ENCODE measurements at regions of chr2 and their contacts with region 1.

Region 1: DNA sequence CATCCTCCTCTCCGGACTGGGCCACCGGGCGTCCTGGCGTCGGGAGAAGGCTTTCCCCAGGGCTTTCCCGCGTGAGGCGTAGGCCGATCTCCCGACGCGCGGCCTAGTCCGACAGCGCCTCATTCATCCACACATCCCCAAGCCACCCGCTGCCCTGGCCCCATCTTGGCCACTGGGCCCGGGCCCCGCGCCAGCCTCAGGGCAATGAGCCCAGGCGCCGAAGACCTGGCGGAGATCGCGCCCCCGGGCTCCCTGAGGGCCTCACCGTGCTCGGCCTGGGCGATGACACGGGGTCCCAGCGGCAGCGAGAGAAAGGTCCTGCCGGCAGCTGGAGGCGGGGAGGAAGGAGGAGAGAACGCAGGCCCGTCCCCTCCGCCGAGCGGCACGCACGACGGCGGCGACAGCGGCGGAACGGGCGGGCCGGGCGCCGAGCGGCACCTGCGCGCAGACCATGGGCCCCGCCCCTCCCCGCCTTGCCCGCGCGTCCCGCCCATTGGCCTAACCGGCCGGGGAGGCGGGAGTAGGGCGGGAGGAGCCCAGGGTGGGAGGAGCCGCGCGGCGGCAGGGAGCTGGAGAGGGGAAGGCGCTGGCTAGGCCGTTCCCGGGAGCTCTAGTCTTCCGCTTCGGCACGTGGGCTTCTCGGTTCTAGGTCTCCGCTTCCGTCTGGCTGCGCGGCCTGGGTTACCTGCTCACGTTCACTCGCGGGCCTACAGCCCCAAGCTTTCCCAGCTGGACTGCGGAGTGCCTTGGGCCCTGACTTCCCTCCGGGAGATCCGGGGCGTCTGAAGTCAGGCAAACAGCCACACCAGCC is at the start of gene OLA1:
- DNase-seq: peak; percentile 88
- ATAC-seq: peak; percentile 96
- H3K4me3 ChIP-seq: peak within 1 kb of the TSS; percentile 77 to 91
- H3K27ac ChIP-seq: peak within 1 kb of the TSS; percentile 74
- H3K4me1 ChIP-seq: peaks cover 13 to 28% of the 10 kb centered on the region in 2 experiments
- H3K27me3 ChIP-seq: no peaks in the 10 kb centered on the region
- CTCF ChIP-seq: no peak
- POLR2A ChIP-seq: peak; percentile 88
- RAD21 ChIP-seq: no peak; the same call in 1 of the 2 replicates
- total RNA-seq, gene OLA1: 219 TPM

Region 2: GRCh38 chr2:174120346-174120745 is 128.0 kb before region 1 on chr2:
- CTCF ChIA-PET with region 1: no interaction called
- POLR2A ChIA-PET with region 1: interaction called, 4 read pairs
- RAD21 ChIA-PET with region 1: no interaction called
- intact Hi-C with region 1: loop called (anchors 2 kb)
- DNase-seq: peak; percentile 82
- ATAC-seq: no peak
- H3K4me3 ChIP-seq: peak overlapping the region; percentile 12 to 48
- H3K27ac ChIP-seq: peak overlapping the region; percentile 89
- H3K4me1 ChIP-seq: peaks cover 86% of the 10 kb centered on the region in 2 experiments
- H3K27me3 ChIP-seq: no peaks in the 10 kb centered on the region
- CTCF ChIP-seq: no peak
- POLR2A ChIP-seq: no peak
- RAD21 ChIP-seq: peak; percentile 8; the same call in 1 of the 2 replicates

Region 3: GRCh38 chr2:174235680-174236079 is 12.7 kb before region 1 on chr2:
- CTCF ChIA-PET with region 1: no interaction called
- POLR2A ChIA-PET with region 1: interaction called, 12 read pairs
- RAD21 ChIA-PET with region 1: no interaction called
- intact Hi-C with region 1: no loop called
- DNase-seq: no peak
- ATAC-seq: peak; percentile 51; the same call in 1 of the 2 replicates
- H3K4me3 ChIP-seq: no peak overlapping the region
- H3K27ac ChIP-seq: no peak overlapping the region; the same call in 1 of the 2 replicates
- H3K4me1 ChIP-seq: peaks cover 19 to 25% of the 10 kb centered on the region in 2 experiments
- H3K27me3 ChIP-seq: no peaks in the 10 kb centered on the region
- CTCF ChIP-seq: no peak
- POLR2A ChIP-seq: no peak
- RAD21 ChIP-seq: no peak

Region 4: DNA sequence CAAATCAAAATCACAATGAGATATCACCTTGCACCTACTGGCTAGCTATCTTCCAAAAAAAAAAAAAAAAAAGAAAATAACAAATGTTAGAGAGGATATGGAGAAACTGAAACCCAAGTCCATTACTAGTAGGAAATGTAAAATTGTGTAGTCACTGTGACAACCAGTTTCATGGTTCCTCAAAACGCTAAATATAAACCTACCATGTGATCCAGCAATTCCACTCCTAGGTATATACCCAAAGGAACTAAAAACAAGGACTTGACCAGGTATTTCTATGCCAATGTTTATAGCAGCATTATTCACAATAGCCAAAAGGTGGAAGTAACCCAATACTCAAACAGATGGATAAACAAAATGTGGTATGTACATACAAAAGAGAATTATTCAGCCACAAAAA is 135.4 kb after region 1 on chr2:
- CTCF ChIA-PET with region 1: no interaction called
- POLR2A ChIA-PET with region 1: no interaction called
- RAD21 ChIA-PET with region 1: no interaction called
- intact Hi-C with region 1: no loop called
- DNase-seq: no peak
- ATAC-seq: no peak
- H3K4me3 ChIP-seq: no peak overlapping the region
- H3K27ac ChIP-seq: no peak overlapping the region
- H3K4me1 ChIP-seq: no peaks in the 10 kb centered on the region
- H3K27me3 ChIP-seq: no peaks in the 10 kb centered on the region
- CTCF ChIP-seq: no peak
- POLR2A ChIP-seq: no peak
- RAD21 ChIP-seq: no peak